RWPE1 (cell line): ENCODE measurements at regions of chr18 and their contacts with region 1.

Region 1: GRCh38 chr18:41761333-41762028 is 193.6 kb upstream of the PIK3C3 start:
- DNase-seq: peak; percentile 68
- H3K27ac ChIP-seq: no peak overlapping the region
- CTCF ChIP-seq: no peak

Region 2: DNA sequence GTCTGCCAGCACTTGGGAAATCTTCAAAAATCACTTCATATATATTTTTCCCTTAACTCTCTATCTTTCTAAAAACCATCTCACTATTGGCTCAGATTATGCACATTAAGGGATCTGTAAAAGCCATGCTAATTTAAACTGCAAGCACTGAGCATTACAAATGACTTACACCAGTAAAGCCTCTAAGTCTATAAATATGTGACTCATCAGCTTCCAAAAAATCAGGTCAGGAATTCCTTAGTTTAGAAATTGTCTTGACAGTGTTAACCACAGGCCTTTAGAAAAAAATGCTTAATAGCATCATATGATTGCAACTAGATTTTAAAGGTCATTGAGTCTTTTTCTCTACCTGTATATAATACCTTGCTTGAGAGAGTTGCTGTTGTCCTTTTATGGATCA is 920.0 kb before region 1 on chr18:
- CTCF ChIA-PET with region 1: interaction called, 10 read pairs
- POLR2A ChIA-PET with region 1: no interaction called
- DNase-seq: peak; percentile 15
- H3K27ac ChIP-seq: no peak overlapping the region
- CTCF ChIP-seq: no peak

Region 3: DNA sequence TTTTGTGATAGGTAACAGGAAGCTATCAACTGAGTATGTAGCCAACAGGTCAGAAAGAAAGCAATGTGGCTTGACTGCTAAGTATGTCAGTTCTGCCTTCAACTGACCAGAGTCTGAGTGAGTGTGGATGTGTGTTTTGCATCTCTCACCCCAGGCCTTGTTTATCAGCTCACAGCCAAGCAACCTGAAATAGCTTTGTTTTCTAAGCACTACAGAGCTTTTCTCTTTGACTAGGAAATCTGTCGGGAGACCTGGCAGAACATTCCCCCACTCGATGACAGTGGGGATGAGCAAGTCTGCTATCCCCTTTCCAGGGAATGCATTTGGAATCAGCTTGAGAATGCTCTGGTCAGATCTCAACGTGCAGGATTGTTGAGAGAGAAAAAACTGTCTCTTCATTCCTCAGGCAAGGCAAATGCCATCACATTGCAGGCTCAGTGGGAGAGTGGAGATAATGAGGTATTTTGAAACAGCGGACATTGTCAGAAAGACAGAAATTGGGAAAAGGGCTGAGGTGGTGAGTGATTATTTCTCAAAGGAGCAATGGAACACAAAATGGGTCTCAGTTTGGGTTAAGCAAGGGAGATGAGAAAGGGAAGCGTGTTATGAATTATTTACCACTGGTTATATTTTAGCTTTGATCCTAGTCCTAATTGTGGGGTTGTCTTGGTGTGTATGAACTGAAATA is 40.2 kb before region 1 on chr18:
- CTCF ChIA-PET with region 1: no interaction called
- POLR2A ChIA-PET with region 1: no interaction called
- DNase-seq: no peak
- H3K27ac ChIP-seq: no peak overlapping the region
- CTCF ChIP-seq: no peak

Region 4: GRCh38 chr18:41954827-41955613 is 193.5 kb after region 1 on chr18 and contains the start of gene PIK3C3:
- CTCF ChIA-PET with region 1: no interaction called
- POLR2A ChIA-PET with region 1: no interaction called
- DNase-seq: peak; percentile 83
- H3K27ac ChIP-seq: peak within 1 kb of the TSS; percentile 66
- CTCF ChIP-seq: no peak